ENCODE measurements at regions of chr4 and their contacts with region 1.

Region 1: DNA sequence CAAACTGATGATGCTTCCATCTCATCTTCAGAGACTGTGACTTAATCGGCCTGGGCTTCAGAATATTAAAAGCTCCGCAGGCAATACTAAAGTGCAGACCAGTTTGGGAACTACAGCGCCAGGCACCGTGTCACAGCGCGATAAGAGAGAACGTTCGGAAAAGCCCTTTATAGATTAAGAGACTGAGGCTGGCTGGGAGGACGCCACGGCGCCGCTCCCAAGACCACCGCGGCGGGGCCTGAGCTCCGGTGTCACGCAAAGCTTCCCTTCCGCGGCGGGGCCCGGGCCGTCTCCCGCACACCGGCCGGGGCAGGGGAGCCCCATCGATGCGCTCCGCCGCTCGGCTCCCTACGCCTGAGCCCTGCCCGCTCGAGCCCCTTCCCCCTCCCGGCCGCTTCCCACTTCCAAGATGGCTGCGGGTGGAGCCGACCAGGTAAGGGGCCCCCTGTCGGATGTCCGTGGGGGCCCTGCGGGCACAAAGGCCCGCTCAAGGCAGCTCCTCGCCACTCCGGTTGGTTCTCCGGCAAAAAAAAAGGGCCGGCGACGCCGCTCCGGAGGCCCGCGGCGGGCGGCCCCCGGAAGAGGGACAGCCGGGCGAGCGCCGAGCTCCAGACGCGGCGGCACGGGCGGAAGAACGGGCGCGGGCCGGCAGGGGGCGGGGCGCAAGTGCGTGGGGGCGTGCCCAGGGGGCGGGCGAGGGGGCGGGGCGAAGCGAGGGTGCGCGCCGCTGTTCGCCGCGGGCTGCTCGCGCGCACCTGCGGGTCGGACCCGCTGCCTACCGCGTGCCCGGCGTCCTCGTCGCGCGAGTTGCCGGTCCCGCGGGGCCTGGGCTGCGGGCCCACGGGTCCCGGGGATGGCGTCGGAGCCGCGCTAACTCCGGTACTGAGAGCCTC is at the start of gene TBC1D14:
- DNase-seq: no peak
- ATAC-seq: peak; percentile 94
- H3K4me3 ChIP-seq: peak within 1 kb of the TSS; percentile 97
- H3K27ac ChIP-seq: peak within 1 kb of the TSS; percentile 96
- H3K4me1 ChIP-seq: peaks cover 17% of the 10 kb centered on the region
- H3K27me3 ChIP-seq: 0 out of 4 replicates have a peak, but pooled peaks cover 0 to 3% of the 10 kb centered on the region in 2 experiments
- CTCF ChIP-seq: no peak; a peak in 2 of 6 replicates
- EP300 ChIP-seq: no peak
- POLR2A ChIP-seq: peak; percentile 82
- RAD21 ChIP-seq: no peak
- polyA plus RNA-seq, gene TBC1D14: 0.87 to 1.1 TPM

Region 2: GRCh38 chr4:6892190-6892908 is 17.0 kb before region 1 on chr4:
- CTCF ChIA-PET with region 1: no interaction called
- POLR2A ChIA-PET with region 1: interaction called, 4 read pairs
- RAD21 ChIA-PET with region 1: interaction called, 12 read pairs
- SMC1A ChIA-PET with region 1: no interaction called
- in situ Hi-C with region 1: no loop called
- intact Hi-C with region 1: no loop called
- DNase-seq: no peak
- ATAC-seq: peak; percentile 58
- H3K4me3 ChIP-seq: no peak overlapping the region
- H3K27ac ChIP-seq: no peak overlapping the region
- H3K4me1 ChIP-seq: peaks cover 11% of the 10 kb centered on the region
- H3K27me3 ChIP-seq: no peaks in the 10 kb centered on the region
- CTCF ChIP-seq: peak; percentile 1 to 22 (median 18); a peak in 2 of 6 replicates
- EP300 ChIP-seq: no peak
- POLR2A ChIP-seq: no peak
- RAD21 ChIP-seq: peak; percentile 8; the same call in 1 of the 2 replicates

Measured in GM12878 (cell line).